Activated CD8-positive, alpha-beta memory T cell treated with anti-CD3 and anti-CD28 coated beads, Interleukin-2, amount 10 ng/mL, durations not matched to agents 7 days and 5 days (primary cell): ENCODE measurements at regions of chr6 and their contacts with region 1.

Region 1: GRCh38 chr6:149028767-149029405 is 282.1 kb downstream of the UST start:
- DNase-seq: peak; percentile 83
- ATAC-seq: peak; percentile 10
- H3K4me3 Mint-ChIP-seq: peak overlapping the region; percentile 32
- H3K27ac Mint-ChIP-seq: peak overlapping the region; percentile 72
- H3K4me1 Mint-ChIP-seq: peaks cover 55% of the 10 kb centered on the region
- H3K27me3 Mint-ChIP-seq: no peaks in the 10 kb centered on the region

Region 2: DNA sequence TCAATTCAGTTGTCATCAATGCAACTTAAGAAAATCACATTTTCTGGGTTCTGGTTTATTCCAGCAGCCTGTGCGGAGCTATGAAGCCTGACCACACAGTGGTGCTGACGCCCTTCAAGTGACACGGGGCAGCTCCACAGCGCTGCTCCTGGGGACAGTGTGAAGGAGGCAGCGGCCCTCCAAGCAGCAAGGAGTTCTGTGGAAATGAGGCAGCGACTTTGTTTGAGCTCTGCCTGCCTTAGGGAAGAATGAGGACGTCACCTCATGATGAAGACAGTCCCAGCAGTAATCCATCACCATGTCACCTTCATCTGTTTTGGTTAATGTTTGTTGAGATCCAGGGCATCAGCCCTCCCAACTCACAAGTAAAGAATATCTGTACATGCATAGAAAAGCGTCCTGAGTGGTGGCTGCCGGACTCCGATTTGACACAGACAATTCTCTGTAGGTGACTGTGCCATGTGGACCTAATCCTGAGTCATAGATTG is 450.6 kb before region 1 on chr6:
- CTCF ChIA-PET with region 1: interaction called, 13 read pairs
- DNase-seq: peak; percentile 74
- ATAC-seq: peak; percentile 96
- H3K4me3 Mint-ChIP-seq: no peak overlapping the region
- H3K27ac Mint-ChIP-seq: no peak overlapping the region
- H3K4me1 Mint-ChIP-seq: peaks cover 6% of the 10 kb centered on the region
- H3K27me3 Mint-ChIP-seq: peaks cover 44% of the 10 kb centered on the region

Region 3: DNA sequence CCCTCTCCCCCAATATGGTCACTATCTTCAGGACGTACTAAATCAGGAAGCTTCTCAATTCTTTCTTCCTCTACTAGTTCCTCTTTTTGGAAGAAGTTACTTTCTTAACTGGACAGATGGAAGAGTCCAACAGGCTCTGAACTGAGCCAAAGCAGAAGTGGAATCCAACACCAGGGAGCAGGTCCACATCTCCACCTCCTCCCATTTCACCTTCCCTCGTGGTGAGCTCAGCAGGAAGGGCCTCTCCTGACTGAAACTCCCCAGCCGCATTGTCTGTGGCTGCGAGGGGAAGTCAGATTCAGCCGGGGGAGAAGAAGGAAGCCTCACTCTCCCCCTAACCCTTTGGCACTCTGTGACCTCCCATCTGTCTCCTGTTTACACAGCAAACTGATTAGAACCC is 345.9 kb before region 1 on chr6:
- CTCF ChIA-PET with region 1: no interaction called
- DNase-seq: no peak
- ATAC-seq: no peak
- H3K4me3 Mint-ChIP-seq: no peak overlapping the region
- H3K27ac Mint-ChIP-seq: no peak overlapping the region
- H3K4me1 Mint-ChIP-seq: peaks cover 6% of the 10 kb centered on the region
- H3K27me3 Mint-ChIP-seq: peaks cover 6% of the 10 kb centered on the region

Region 4: GRCh38 chr6:149054559-149055194 is 25.8 kb after region 1 on chr6:
- CTCF ChIA-PET with region 1: interaction called, 15 read pairs
- DNase-seq: no peak
- ATAC-seq: peak; percentile 22
- H3K4me3 Mint-ChIP-seq: peak overlapping the region; percentile 69
- H3K27ac Mint-ChIP-seq: peak overlapping the region; percentile 94
- H3K4me1 Mint-ChIP-seq: peaks cover 79% of the 10 kb centered on the region
- H3K27me3 Mint-ChIP-seq: no peaks in the 10 kb centered on the region

Region 5: DNA sequence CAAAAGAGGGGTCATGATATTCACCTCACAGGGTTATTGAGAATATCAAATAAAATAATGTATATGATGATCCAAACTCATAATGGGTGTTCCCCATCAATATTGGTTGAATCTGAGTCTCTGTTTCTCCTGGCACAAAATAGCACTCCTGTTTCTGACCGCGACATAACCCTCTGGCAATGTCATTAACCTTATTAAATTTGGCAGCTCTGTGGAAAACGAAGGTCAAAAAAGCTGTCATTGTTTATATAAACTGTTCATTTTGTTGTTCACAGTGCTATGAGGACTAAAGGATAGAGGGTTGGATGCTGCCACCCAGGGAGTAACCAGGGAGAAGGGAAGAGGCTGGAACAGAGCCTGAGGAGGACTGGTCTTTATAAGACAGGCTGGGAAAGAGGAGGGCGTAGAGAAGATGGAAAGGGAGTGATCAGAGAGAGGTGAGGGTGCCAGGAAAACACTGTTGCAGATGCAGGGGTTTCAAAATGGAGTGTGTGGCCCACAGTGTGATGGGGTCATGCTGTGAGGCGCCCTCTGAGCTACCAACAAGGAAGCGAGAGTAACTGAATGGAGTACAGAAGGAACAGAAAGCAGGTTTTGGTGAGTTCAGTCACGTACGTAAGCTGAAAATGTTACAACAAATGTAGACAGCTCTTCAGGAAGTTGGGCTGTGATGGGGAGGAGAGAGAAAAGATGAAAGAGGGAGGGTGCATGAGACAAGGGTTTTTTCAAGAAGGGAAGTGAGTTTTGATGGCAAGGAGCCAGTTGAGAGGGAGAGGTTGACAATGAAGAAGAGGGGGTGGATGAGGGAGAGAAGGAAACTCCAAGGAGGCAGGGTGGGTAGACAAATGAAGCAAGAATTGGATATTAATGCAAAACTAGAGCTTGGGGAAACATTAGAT is 37.0 kb after region 1 on chr6:
- CTCF ChIA-PET with region 1: interaction called, 17 read pairs
- DNase-seq: peak; percentile 70
- ATAC-seq: peak; percentile 88
- H3K4me3 Mint-ChIP-seq: peak overlapping the region; percentile 35
- H3K27ac Mint-ChIP-seq: peak overlapping the region; percentile 85
- H3K4me1 Mint-ChIP-seq: peaks cover 48% of the 10 kb centered on the region
- H3K27me3 Mint-ChIP-seq: no peaks in the 10 kb centered on the region

Region 6: GRCh38 chr6:149082286-149082707 is 53.4 kb after region 1 on chr6:
- CTCF ChIA-PET with region 1: interaction called, 56 read pairs
- DNase-seq: peak; percentile 94
- ATAC-seq: peak; percentile 79
- H3K4me3 Mint-ChIP-seq: peak overlapping the region; percentile 18
- H3K27ac Mint-ChIP-seq: peak overlapping the region; percentile 96
- H3K4me1 Mint-ChIP-seq: peaks cover 87% of the 10 kb centered on the region
- H3K27me3 Mint-ChIP-seq: no peaks in the 10 kb centered on the region

Region 7: DNA sequence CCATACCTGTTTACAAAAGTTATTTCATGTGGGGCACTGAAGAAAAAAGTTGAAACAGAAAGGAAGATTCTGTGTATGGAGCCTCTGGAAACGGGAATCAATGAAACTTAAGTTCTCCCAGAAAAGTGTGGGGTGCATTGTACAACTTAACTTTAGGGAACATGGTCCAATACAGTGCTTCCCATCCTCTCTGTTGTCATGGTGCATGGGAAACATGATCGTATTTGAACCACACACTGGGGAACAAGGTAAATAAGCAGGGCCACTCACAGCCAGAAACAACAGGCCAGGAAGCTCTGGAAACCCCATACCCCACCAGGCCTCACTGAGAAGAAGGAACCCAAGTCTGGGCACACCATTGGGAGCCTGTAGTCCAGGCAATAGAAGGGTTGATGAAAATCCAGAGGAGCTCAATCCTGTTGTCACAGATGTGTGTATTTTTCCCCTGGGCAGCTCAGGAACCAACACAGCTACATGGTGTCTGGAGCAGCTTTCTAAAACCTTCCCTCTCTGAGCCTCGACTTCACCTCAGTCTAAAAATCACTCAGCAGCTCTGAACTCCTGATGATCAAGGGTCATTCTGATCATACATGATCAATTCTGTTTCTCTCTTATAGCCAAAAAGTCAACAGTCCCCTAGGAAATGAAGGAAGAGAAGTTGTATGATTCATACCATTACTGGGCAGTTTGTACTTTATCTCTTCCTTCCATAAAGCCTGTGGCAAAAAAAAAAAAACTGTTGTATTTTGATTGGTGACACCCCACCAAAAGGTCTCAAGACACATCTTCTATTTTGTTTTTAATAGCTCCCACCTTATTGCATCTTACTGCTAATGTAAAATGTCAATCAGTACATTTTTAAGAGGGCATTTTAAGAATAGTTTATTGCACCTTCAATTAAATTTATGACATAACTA is 90.1 kb after region 1 on chr6:
- CTCF ChIA-PET with region 1: no interaction called
- DNase-seq: no peak
- ATAC-seq: no peak
- H3K4me3 Mint-ChIP-seq: no peak overlapping the region
- H3K27ac Mint-ChIP-seq: peak overlapping the region; percentile 70
- H3K4me1 Mint-ChIP-seq: peaks cover 57% of the 10 kb centered on the region
- H3K27me3 Mint-ChIP-seq: no peaks in the 10 kb centered on the region

Region 8: GRCh38 chr6:149182262-149182661 is 153.4 kb after region 1 on chr6:
- CTCF ChIA-PET with region 1: no interaction called
- DNase-seq: no peak
- ATAC-seq: no peak
- H3K4me3 Mint-ChIP-seq: no peak overlapping the region
- H3K27ac Mint-ChIP-seq: no peak overlapping the region
- H3K4me1 Mint-ChIP-seq: peaks cover 6% of the 10 kb centered on the region
- H3K27me3 Mint-ChIP-seq: no peaks in the 10 kb centered on the region